Activated CD8-positive, alpha-beta T cell treated with anti-CD3 and anti-CD28 coated beads for 36 hours (primary cell): ENCODE measurements at regions of chr14 and their contacts with region 1.

Region 1: DNA sequence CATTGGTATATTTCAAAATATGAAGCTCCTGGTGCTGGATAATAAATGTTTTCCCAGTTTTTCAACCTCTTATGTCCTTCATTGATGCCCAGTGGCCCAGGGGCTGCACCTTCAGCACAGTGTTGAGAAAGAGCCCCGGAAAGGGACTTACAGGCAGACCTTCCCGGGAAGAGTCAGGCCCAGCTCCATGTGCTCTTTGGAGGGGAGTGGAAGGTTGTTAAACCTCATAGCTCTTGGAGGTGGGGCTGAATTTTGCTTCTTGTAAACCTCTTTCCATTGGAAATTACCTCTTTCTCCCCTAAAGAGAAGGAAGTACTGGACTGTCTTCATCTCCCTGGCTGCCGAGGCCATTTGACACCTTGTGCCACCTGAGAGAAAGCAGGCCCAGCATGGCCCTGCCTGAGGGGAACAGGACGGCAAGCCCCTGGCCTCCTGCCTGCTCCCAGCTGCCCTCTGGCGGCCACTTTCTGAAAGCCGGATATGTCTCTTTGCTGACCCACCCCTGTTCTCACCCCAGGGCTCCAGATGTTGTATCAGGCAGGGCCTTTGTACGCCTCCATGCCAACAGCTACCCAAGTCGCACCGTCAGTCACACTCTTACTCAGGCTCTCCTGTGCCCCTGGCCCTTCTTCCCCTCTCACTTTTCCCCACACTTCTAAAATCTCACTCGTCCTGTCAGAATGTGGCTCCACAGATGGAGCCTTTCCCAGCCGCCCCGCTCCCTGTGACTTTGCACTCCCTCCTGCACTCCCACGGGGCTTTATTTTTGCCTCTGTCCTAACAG is 43.0 kb downstream of the EVL start:
- DNase-seq: peak; percentile 95
- ATAC-seq: peak; percentile 58
- H3K4me3 Mint-ChIP-seq: peak overlapping the region; percentile 16
- H3K27ac Mint-ChIP-seq: peak overlapping the region; percentile 96
- H3K4me1 Mint-ChIP-seq: peaks cover 82% of the 10 kb centered on the region
- H3K27me3 Mint-ChIP-seq: no peaks in the 10 kb centered on the region
- CTCF ChIP-seq: peak; percentile 87

Region 2: DNA sequence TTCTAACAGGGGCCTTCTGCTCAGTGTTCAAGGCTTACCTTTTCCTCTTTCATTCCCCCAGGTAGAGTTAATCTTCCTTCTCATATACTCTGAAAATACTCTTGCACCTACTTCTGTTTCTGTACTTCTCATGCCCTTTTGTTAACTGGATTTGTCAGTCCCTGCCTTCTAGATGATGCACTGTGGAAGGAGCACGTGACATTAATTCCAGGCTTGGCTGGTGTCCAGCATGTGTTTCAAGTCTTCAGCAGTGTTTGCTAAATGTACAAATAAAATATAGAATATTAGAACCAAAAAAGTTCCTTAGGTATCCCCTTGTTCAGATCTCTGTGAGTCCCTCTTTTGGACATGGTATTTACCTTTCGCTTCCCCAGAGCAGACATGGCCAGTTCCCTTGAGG is 70.9 kb before region 1 on chr14:
- CTCF ChIA-PET with region 1: interaction called, 19 read pairs
- POLR2A ChIA-PET with region 1: no interaction called
- intact Hi-C with region 1: no loop called
- DNase-seq: no peak
- ATAC-seq: no peak
- H3K4me3 Mint-ChIP-seq: no peak overlapping the region
- H3K27ac Mint-ChIP-seq: no peak overlapping the region
- H3K4me1 Mint-ChIP-seq: peaks cover 9% of the 10 kb centered on the region
- H3K27me3 Mint-ChIP-seq: no peaks in the 10 kb centered on the region
- CTCF ChIP-seq: no peak

Region 3: DNA sequence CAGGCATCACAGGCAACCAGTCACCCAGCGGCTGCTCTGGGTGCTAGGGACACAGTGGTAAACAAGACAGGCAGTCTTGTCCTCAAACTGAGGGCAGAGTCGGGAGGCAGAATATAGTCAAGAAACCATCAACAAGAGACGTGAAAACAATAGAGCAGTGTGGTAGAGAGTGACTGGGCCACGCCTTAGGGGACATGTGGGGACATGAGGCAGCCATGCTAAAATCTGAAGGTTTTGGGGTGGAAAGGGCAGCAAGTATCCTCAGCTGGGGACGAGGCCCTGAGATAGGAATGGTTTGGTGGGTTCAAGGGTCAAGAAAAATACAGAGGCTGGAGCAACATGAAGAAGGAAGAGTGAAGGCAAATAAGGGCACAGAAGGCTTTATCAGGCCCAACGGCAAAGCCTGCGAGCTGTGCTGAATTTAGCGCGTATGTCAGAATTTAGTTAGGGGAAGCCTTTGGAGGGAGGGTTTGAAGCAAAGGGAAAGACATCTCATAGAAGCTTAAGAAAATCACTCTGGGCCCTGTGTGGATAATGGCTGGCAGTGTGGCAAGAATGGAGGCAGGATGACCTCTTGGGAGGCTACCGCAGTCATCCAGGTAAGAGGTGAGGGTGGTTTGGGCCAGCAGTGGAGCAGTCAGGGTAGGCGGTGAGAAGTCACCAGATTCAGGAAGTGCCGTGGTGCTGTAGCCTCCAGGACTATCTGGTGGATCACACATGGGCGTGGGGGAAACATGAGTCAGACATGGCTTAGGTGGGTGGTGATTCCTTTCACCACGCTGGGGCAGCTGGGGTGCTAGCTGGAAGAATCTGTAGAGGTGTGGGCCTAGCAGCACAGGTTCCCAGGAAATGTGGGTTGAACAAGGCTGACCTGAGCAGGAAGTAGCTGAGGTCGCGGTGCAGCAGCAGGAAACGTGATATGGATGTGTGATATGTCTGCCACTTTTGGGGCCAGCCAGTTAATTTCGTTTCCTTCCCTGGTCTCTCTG is 40.0 kb before region 1 on chr14:
- CTCF ChIA-PET with region 1: interaction called, 913 read pairs
- POLR2A ChIA-PET with region 1: interaction called, 840 read pairs
- intact Hi-C with region 1: loop called (anchors 5 kb)
- DNase-seq: peak; percentile 95
- ATAC-seq: peak; percentile 41
- H3K4me3 Mint-ChIP-seq: peak overlapping the region; percentile 89
- H3K27ac Mint-ChIP-seq: peak overlapping the region; percentile 99
- H3K4me1 Mint-ChIP-seq: peaks cover 47% of the 10 kb centered on the region
- H3K27me3 Mint-ChIP-seq: no peaks in the 10 kb centered on the region
- CTCF ChIP-seq: no peak

Region 4: GRCh38 chr14:100096570-100096971 is 11.7 kb before region 1 on chr14:
- CTCF ChIA-PET with region 1: interaction called, 124 read pairs
- POLR2A ChIA-PET with region 1: interaction called, 22 read pairs
- intact Hi-C with region 1: no loop called
- DNase-seq: no peak
- ATAC-seq: no peak
- H3K4me3 Mint-ChIP-seq: no peak overlapping the region
- H3K27ac Mint-ChIP-seq: peak overlapping the region; percentile 92
- H3K4me1 Mint-ChIP-seq: peaks cover 86% of the 10 kb centered on the region
- H3K27me3 Mint-ChIP-seq: no peaks in the 10 kb centered on the region
- CTCF ChIP-seq: no peak